Naive thymus-derived CD8-positive, alpha-beta T cell (primary cell): ENCODE measurements at regions of chr22 and their contacts with region 1.

Region 1: DNA sequence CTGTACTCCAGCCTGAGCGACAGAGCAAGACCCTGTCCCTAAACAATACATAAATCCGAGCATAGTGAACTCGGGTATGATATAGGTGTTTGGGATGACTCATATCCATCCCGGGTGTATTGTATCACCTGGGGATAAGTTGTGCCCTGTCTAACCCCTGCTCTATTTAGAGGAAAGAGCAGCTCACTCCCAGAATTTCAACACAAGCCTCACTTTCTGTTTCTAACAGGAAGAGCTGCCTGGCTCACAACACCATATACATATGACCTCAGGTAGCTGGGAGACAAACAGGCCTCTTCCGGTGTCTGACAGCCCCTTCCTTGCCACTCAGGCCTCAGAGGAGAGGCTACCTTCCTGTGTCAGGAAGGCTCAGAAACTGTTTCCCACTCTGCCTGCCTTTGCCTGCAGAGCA is 9.9 kb upstream of the MICALL1 start:
- DNase-seq: peak in 9 of 10 donors; percentile 11 to 72 (median 41)
- ATAC-seq: peak; percentile 97 to 98
- H3K4me3 Mint-ChIP-seq: peak overlapping the region; percentile 47 to 76 (median 69)
- H3K27ac Mint-ChIP-seq: peak overlapping the region; percentile 96 to 97 (median 96)
- H3K4me1 Mint-ChIP-seq: peaks cover 11 to 32% (median 15%) of the 10 kb centered on the region in 4 donors
- H3K27me3 Mint-ChIP-seq: no peaks in the 10 kb centered on the region

Region 2: DNA sequence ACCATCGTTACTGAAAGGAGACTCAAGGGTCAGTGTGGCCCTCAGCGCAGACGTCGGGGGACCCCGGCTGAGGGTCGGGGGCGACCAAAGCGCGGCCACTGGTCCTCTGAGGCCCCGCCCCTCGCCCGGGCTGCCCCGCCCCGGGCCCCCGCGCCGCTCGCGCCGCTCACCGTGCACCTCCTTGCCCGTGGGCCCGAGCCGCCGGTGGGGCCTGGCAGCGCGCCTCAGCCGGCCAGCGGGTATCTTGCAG is 52.5 kb before region 1 on chr22:
- POLR2A ChIA-PET with region 1: interaction called, 10 read pairs
- DNase-seq: peak in 1 of 10 donors; percentile 51
- ATAC-seq: peak; percentile 31 to 43
- H3K4me3 Mint-ChIP-seq: peak overlapping the region; percentile 77 to 92 (median 88)
- H3K27ac Mint-ChIP-seq: peak overlapping the region in 9 of 10 donors; percentile 75 to 94 (median 87)
- H3K4me1 Mint-ChIP-seq: peaks cover 9 to 34% (median 30%) of the 10 kb centered on the region in 4 donors
- H3K27me3 Mint-ChIP-seq: no peaks in the 10 kb centered on the region

Region 3: GRCh38 chr22:37862570-37863325 is 33.4 kb before region 1 on chr22:
- POLR2A ChIA-PET with region 1: no interaction called
- DNase-seq: no peak
- ATAC-seq: no peak
- H3K4me3 Mint-ChIP-seq: no peak overlapping the region
- H3K27ac Mint-ChIP-seq: peak overlapping the region in 2 of 10 donors; percentile 26 to 31
- H3K4me1 Mint-ChIP-seq: peaks cover 4 to 10% (median 8%) of the 10 kb centered on the region in 4 donors
- H3K27me3 Mint-ChIP-seq: no peaks in the 10 kb centered on the region

Region 4: DNA sequence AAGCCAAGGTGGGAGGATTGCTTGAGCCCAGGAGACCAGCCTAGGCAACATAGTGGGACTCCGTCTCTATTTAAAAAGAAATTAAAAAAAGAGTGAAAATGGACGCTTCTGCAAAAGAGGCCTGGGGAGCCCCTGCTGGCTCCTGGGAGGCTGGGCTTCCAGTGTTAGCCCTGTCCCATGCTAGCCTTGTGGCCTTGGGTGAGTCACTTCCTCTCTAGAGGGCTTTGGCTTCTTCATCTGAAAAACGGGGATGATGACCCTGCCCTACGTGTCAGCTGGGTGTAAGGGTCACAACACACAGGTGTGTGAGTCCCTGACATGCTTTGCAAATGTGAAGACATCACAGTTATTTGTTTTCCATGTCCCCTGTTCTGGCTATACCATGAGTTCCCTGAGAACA is 727.2 kb after region 1 on chr22:
- POLR2A ChIA-PET with region 1: no interaction called
- DNase-seq: no peak
- ATAC-seq: no peak
- H3K4me3 Mint-ChIP-seq: peak overlapping the region in 1 of 10 donors; percentile 10
- H3K27ac Mint-ChIP-seq: no peak overlapping the region
- H3K4me1 Mint-ChIP-seq: no peaks in the 10 kb centered on the region
- H3K27me3 Mint-ChIP-seq: peaks cover 0 to 6% (median 2%) of the 10 kb centered on the region in 5 donors